ENCODE measurements at regions of chr11 and their contacts with region 1.

Region 1: GRCh38 chr11:31810779-31811647 is at the start of gene PAX6:
- DNase-seq: peak; percentile 99
- H3K4me3 ChIP-seq: peak within 1 kb of the TSS; percentile 89
- CTCF ChIP-seq: no peak

Region 2: GRCh38 chr11:31509429-31510345 is 301.3 kb before region 1 on chr11 and contains the starts of genes ELP4 and IMMP1L:
- in situ Hi-C with region 1: loop called (anchors 5 kb)
- DNase-seq: peak; percentile 93
- H3K4me3 ChIP-seq: peak within 1 kb of the TSS; percentile 87
- CTCF ChIP-seq: no peak

Measured in astrocyte of the cerebellum (primary cell).